CD4-positive, alpha-beta T cell (primary cell): ENCODE measurements at regions of chr2 and their contacts with region 1.

Region 1: GRCh38 chr2:224357098-224357901 is 44.6 kb downstream of the FAM124B start:
- DNase-seq: peak; percentile 6 to 81 (median 42)
- ATAC-seq: peak; percentile 83
- H3K4me3 ChIP-seq: no peak overlapping the region
- H3K4me3 Mint-ChIP-seq: no peak overlapping the region
- H3K27ac ChIP-seq: no peak overlapping the region
- H3K27ac Mint-ChIP-seq: no peak overlapping the region
- H3K4me1 ChIP-seq: no peaks in the 10 kb centered on the region
- H3K4me1 Mint-ChIP-seq: no peaks in the 10 kb centered on the region
- H3K27me3 ChIP-seq: no peaks in the 10 kb centered on the region
- H3K27me3 Mint-ChIP-seq: peaks cover 12% of the 10 kb centered on the region
- CTCF ChIP-seq: peak; percentile 93

Region 2: GRCh38 chr2:224449212-224450147 is 92.2 kb after region 1 on chr2:
- CTCF ChIA-PET with region 1: no interaction called
- POLR2A ChIA-PET with region 1: no interaction called
- intact Hi-C with region 1: loop called in 1 of 2 experiments (anchors 5 kb)
- DNase-seq: peak in 3 of 14 experiments; percentile 10 to 47 (median 33)
- ATAC-seq: no peak
- H3K4me3 ChIP-seq: no peak overlapping the region
- H3K4me3 Mint-ChIP-seq: no peak overlapping the region
- H3K27ac ChIP-seq: no peak overlapping the region
- H3K27ac Mint-ChIP-seq: no peak overlapping the region
- H3K4me1 ChIP-seq: no peaks in the 10 kb centered on the region
- H3K4me1 Mint-ChIP-seq: no peaks in the 10 kb centered on the region
- H3K27me3 ChIP-seq: no peaks in the 10 kb centered on the region
- H3K27me3 Mint-ChIP-seq: peaks cover 21% of the 10 kb centered on the region
- CTCF ChIP-seq: peak; percentile 57

Region 3: GRCh38 chr2:224650815-224651439 is 293.6 kb after region 1 on chr2:
- CTCF ChIA-PET with region 1: interaction called, 3 read pairs
- POLR2A ChIA-PET with region 1: no interaction called
- intact Hi-C with region 1: loop called (anchors 1 kb)
- DNase-seq: peak in 4 of 14 experiments; percentile 7 to 74 (median 64)
- ATAC-seq: peak; percentile 57
- H3K4me3 ChIP-seq: no peak overlapping the region
- H3K4me3 Mint-ChIP-seq: no peak overlapping the region
- H3K27ac ChIP-seq: no peak overlapping the region
- H3K27ac Mint-ChIP-seq: no peak overlapping the region
- H3K4me1 ChIP-seq: no peaks in the 10 kb centered on the region
- H3K4me1 Mint-ChIP-seq: peaks cover 4% of the 10 kb centered on the region
- H3K27me3 ChIP-seq: no peaks in the 10 kb centered on the region
- H3K27me3 Mint-ChIP-seq: peaks cover 7% of the 10 kb centered on the region
- CTCF ChIP-seq: peak; percentile 87

Region 4: DNA sequence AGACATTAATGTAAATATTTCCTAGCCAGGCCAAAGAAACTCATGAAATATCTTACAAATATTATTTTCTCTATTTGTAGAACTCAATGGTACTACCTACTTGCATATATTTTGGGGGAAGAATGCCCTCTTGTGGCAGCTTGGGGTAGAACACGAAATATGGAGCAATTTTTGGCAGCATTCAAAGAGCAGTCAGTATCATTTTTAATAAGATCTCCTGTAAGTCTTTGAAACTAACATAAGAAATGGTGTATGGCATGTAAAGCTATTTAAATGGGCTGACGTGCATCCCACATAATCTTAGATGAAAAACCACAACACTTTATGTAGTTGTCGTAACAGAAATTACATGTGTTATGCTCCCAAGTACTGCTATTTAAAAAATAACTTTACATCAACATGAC is 421.2 kb after region 1 on chr2:
- CTCF ChIA-PET with region 1: interaction called, 3 read pairs
- POLR2A ChIA-PET with region 1: no interaction called
- intact Hi-C with region 1: loop called (anchors 1 to 2 kb)
- DNase-seq: peak; percentile 23 to 75 (median 50)
- ATAC-seq: peak; percentile 78
- H3K4me3 ChIP-seq: no peak overlapping the region
- H3K4me3 Mint-ChIP-seq: no peak overlapping the region
- H3K27ac ChIP-seq: no peak overlapping the region
- H3K27ac Mint-ChIP-seq: peak overlapping the region; percentile 59
- H3K4me1 ChIP-seq: no peaks in the 10 kb centered on the region
- H3K4me1 Mint-ChIP-seq: peaks cover 8% of the 10 kb centered on the region
- H3K27me3 ChIP-seq: no peaks in the 10 kb centered on the region
- H3K27me3 Mint-ChIP-seq: no peaks in the 10 kb centered on the region
- CTCF ChIP-seq: peak; percentile 97